PC-9 (cell line): ENCODE measurements at regions of chr12 and their contacts with region 1.

Region 1: DNA sequence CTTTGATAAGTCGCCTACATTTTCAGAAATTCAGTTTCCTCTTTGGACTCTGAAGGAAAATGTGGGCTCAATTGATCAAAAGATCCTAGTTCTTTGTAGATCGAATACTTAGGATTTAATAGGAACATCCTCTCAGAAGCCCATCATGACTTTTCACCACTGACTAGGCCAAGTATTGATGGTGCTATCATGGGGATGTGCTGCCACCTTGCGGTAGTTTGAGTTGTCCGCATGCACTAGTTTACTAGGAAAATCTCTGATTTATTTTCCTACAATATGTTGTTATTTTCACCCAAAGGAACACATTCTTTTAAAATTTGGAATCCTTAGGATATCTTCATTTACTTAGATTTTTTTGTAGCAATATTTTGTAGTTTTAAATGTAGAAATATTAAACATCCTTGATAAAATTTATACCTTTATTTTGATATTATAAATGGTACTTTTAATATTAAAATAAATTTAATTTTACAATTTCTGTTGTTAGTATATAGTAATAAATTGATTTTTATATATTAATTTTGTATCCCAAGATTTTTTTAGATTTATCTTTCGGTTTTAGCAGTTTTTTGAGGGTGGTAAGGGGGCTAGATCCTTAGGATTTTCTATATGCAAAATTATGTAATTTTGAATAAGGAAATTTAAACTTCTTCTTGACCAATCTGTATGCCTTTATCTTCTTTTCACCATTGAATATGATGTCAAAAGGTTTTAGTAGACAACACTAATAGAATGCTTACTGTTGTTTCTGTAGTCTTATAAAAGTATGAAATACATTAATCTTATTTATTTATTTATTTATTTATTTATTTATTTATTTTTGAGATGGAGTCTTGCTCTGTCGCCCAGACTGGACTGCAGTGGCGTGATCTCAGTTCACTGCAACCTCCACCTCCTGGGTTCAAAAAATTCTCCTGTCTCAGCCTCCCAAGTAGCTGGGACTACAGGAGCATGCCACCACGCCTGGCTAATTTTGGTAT is 52.9 kb upstream of the OR9K2 start:
- DNase-seq: peak in 1 of 2 experiments; percentile 45
- H3K4me3 ChIP-seq: no peak overlapping the region
- H3K27ac ChIP-seq: no peak overlapping the region
- H3K4me1 ChIP-seq: no peaks in the 10 kb centered on the region
- H3K27me3 ChIP-seq: peaks cover 5% of the 10 kb centered on the region; the same call in 1 of the 2 replicates
- CTCF ChIP-seq: peak; percentile 87

Region 2: GRCh38 chr12:54596526-54596946 is 476.8 kb before region 1 on chr12:
- CTCF ChIA-PET with region 1: no interaction called
- POLR2A ChIA-PET with region 1: no interaction called
- intact Hi-C with region 1: loop called (anchors 5 kb)
- DNase-seq: peak in 1 of 2 experiments; percentile 37
- H3K4me3 ChIP-seq: no peak overlapping the region
- H3K27ac ChIP-seq: no peak overlapping the region
- H3K4me1 ChIP-seq: no peaks in the 10 kb centered on the region
- H3K27me3 ChIP-seq: peaks cover 72% of the 10 kb centered on the region
- CTCF ChIP-seq: peak; percentile 85

Region 3: DNA sequence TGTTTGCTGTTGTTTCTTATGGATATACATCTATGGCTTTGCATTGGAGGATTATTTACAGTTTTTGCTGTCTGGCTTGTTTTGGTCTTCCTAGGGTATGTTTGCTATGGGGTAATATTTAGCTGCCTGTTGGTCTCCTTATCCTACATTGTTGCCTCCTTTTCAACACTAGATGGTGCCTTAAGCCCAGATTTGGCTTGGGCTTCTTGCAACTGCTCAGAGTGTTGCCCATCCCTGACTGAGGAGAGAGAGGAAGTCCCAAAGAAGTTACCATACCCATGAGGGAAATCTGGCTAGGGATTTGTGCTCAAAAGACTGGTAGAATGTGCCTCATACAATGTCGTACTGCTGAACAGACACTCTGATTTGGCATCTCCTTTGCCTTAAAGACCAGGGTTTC is 313.6 kb before region 1 on chr12:
- CTCF ChIA-PET with region 1: no interaction called
- POLR2A ChIA-PET with region 1: no interaction called
- intact Hi-C with region 1: loop called (anchors 5 kb)
- DNase-seq: no peak
- H3K4me3 ChIP-seq: no peak overlapping the region
- H3K27ac ChIP-seq: no peak overlapping the region
- H3K4me1 ChIP-seq: no peaks in the 10 kb centered on the region
- H3K27me3 ChIP-seq: 0 out of 2 replicates have a peak, but pooled peaks cover 13% of the 10 kb centered on the region
- CTCF ChIP-seq: peak; percentile 54

Region 4: DNA sequence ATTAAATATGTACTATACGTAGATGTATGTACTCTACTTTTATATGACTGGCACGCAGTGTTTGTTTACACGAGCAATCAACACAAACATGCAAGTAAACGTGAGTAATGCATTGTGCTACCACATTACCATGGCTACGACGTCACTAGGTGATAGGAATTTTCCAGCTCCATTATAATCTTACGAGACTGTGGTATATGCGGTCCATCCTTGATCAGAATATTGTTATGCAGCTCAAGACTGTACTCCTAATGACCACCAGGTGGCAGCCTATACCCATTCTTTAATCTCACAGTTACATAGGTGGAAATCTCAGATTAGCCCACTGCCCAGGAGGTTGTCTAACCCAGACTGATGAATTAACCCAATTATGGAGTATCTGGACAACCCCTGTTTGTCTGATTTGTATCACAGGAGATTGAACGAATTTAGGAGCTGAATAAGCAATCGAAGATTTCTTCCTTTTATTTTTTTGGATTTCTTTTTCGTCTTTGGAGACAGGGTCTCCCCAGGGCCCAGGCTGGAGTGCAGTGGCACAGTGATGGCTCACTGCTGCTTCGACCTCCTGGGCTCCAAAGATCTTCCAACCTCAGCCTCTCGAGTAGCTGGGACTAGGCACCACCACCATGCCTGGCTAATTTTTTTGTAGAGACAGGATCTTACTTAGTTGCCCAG is 80.0 kb before region 1 on chr12:
- CTCF ChIA-PET with region 1: interaction called, 17 read pairs
- POLR2A ChIA-PET with region 1: no interaction called
- intact Hi-C with region 1: loop called (anchors 1 kb)
- DNase-seq: peak; percentile 17 to 62
- H3K4me3 ChIP-seq: no peak overlapping the region
- H3K27ac ChIP-seq: no peak overlapping the region
- H3K4me1 ChIP-seq: no peaks in the 10 kb centered on the region
- H3K27me3 ChIP-seq: peaks cover 28% of the 10 kb centered on the region
- CTCF ChIP-seq: peak; percentile 89